Dendritic cell treated with granulocyte-macrophage colony-stimulating factor and Interleukin-4, amounts not matched to agents 40 ng/mL and 50 ng/mL, for 4 days (primary cell): ENCODE measurements at regions of chr3 and their contacts with region 1.

Region 1: DNA sequence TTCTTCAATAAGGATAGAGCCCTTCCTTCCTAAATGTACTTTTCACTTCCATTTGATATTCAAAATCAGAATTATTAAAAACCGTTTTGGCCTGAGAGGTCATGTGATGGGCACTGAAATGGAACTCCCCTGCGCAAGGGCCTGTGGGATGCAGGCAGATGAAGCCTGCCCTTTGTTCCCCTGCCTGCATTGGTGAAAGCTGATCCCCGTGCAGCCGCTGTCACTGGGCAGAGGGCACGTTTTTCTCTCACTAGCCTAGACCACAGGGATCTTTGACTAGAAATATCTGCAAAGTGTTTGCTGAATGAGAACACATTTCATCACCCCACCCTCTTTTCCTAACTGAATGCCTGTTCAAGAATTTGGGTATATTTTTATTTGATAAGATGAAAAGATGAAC is 74.9 kb downstream of the TIPARP start:
- H3K4me3 Mint-ChIP-seq: no peak overlapping the region
- H3K27ac Mint-ChIP-seq: no peak overlapping the region
- H3K4me1 Mint-ChIP-seq: peaks cover 14% of the 10 kb centered on the region
- H3K27me3 Mint-ChIP-seq: peaks cover 8% of the 10 kb centered on the region

Region 2: DNA sequence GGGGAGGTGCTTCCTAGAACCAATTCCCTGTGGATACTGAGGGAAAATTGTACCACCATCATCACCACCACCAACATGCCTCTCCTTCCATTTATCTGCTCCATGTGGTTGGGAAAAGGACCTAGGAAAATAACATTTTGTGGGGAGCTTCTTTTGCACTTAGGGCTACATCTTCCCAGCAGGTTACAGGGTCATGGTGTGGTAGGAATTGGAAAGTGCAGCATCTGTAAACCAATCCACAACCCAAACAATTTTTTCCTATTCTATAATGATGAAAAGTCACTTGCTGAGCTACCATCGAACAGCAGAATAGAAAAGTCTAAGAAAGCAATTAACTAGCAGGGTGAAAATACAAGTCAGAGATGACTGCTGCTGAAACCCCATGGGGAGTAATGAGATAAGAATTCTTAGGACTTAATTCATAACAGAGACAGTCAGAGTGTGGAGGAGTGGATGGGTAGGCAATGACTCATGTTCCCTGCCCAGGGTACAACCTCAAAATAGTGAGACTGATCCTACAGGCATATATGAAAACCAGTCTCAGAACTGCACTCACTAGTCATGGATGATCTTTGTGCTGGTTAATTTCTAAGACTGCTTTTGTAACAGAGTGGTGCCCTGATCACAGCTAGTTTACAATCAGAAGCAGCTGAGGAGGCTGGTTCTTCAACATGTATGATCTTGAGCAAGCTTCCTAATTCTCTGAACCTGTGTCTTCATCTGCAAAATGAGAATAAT is 38.9 kb after region 1 on chr3:
- intact Hi-C with region 1: loop called (anchors 5 kb)
- H3K4me3 Mint-ChIP-seq: no peak overlapping the region
- H3K27ac Mint-ChIP-seq: no peak overlapping the region
- H3K4me1 Mint-ChIP-seq: peaks cover 17% of the 10 kb centered on the region
- H3K27me3 Mint-ChIP-seq: no peaks in the 10 kb centered on the region

Region 3: GRCh38 chr3:157261000-157261399 is 511.8 kb after region 1 on chr3:
- intact Hi-C with region 1: no loop called
- H3K4me3 Mint-ChIP-seq: no peak overlapping the region
- H3K27ac Mint-ChIP-seq: no peak overlapping the region
- H3K4me1 Mint-ChIP-seq: no peaks in the 10 kb centered on the region
- H3K27me3 Mint-ChIP-seq: no peaks in the 10 kb centered on the region